ENCODE measurements at regions of chr5 and their contacts with region 1.

Region 1: DNA sequence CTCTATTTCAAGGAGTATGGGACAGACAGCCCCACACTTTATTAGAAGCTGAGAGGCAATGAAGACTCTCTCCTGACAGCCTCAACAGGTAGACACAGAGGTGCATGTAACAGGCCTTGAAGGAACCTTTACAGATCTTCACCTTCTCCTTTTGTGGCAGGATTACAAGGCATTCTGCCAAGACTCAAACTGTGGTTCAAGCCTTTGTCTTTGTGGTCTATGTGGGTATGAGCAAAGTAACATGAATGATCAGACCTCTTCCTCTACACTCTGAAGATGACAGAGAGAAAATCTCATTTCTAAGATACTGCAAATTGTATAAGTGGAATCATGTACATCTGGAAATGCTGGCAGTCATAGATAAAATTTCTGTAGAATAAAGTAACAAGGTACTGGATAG is 346.9 kb downstream of the CDH9 start:
- DNase-seq: no peak
- ATAC-seq: no peak
- H3K4me3 ChIP-seq: no peak overlapping the region
- H3K27ac ChIP-seq: no peak overlapping the region
- H3K4me1 ChIP-seq: no peaks in the 10 kb centered on the region
- H3K27me3 ChIP-seq: no peaks in the 10 kb centered on the region
- CTCF ChIP-seq: no peak

Region 2: DNA sequence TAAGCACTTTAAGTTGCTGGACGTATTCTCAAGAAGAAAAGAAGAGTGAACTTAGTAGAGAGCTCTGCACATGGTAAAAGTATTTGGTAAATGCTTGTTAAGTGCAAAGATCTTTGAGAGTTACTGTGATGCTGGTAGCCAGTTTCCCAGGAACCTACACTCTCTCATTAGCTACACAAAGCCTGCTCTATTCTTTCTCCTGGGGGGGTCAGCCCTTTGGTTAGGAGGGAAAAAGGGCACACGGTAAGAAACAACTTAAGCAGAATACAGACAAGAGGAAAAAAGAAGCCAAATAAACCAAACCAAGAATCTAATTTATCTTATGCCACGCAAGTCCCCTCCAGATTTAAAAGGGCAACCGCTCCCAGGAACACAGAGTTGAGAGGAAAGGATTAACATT is 946.6 kb before region 1 on chr5:
- intact Hi-C with region 1: loop called in 1 of 10 experiments (anchors 5 kb)
- DNase-seq: no peak
- ATAC-seq: no peak
- H3K4me3 ChIP-seq: no peak overlapping the region
- H3K27ac ChIP-seq: no peak overlapping the region
- H3K4me1 ChIP-seq: no peaks in the 10 kb centered on the region
- H3K27me3 ChIP-seq: no peaks in the 10 kb centered on the region
- CTCF ChIP-seq: no peak

Region 3: GRCh38 chr5:26535215-26535614 is 156.3 kb before region 1 on chr5:
- intact Hi-C with region 1: no loop called
- DNase-seq: no peak
- ATAC-seq: no peak
- H3K4me3 ChIP-seq: no peak overlapping the region
- H3K27ac ChIP-seq: no peak overlapping the region
- H3K4me1 ChIP-seq: no peaks in the 10 kb centered on the region
- H3K27me3 ChIP-seq: no peaks in the 10 kb centered on the region
- CTCF ChIP-seq: no peak